CD4-positive, alpha-beta T cell (primary cell): ENCODE measurements at regions of chr1 and their contacts with region 1.

Region 1: GRCh38 chr1:153946622-153947241 is at the start of gene DENND4B:
- DNase-seq: peak; percentile 55 to 89 (median 70)
- ATAC-seq: peak; percentile 57
- H3K4me3 ChIP-seq: peak within 1 kb of the TSS; percentile 84
- H3K4me3 Mint-ChIP-seq: peak within 1 kb of the TSS; percentile 89
- H3K27ac ChIP-seq: peak within 1 kb of the TSS; percentile 92 to 94
- H3K27ac Mint-ChIP-seq: peak within 1 kb of the TSS; percentile 86
- H3K4me1 ChIP-seq: peaks cover 50% of the 10 kb centered on the region
- H3K4me1 Mint-ChIP-seq: peaks cover 38% of the 10 kb centered on the region
- H3K27me3 ChIP-seq: no peaks in the 10 kb centered on the region
- H3K27me3 Mint-ChIP-seq: no peaks in the 10 kb centered on the region
- CTCF ChIP-seq: peak; percentile 88
- total RNA-seq, gene DENND4B: 87.0 to 98.7 TPM

Region 2: DNA sequence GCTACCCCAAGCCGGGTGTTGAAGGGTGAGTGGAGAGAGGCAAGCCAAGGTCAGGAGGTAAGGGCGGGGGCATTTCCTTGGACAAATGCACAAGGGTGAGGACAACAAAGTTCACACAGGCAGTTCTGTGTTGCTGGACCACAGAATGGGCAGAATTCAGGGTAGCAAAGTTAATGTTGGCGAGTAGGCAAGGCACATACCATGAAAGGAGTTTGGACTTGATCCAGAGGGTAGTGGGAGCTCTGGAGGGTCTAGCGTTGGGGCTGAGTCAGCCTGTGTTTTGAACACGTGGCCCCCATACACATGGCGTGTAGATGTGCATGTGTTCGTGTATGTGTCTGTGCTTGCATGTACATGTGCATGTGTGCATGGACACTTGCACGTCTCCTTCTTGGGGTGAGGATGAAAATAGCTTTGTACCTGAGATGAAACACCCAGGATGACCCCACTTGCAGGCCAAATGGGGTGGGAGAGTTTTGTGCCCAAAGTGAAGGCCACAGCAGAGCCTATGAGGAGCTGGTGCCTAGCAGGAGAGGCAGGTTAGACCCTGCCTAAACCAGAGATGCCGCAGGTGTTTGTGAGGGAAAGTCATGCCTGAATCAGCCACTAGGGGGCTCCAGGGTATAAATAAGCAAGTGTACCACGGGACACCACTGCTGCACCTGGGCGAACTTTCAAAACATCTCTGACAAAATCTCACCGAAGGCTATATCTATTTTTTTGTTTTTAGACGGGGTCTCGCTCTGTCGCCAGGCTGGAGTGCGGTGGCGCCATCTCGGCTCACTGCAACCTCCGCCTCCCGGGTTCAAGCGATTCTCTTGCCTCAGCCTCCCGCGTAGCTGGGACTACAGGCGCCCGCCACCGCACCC is 149.7 kb before region 1 on chr1:
- CTCF ChIA-PET with region 1: interaction called, 5 read pairs
- POLR2A ChIA-PET with region 1: no interaction called
- intact Hi-C with region 1: loop called (anchors 1 kb)
- DNase-seq: peak; percentile 70 to 92 (median 84)
- ATAC-seq: peak; percentile 98
- H3K4me3 ChIP-seq: no peak overlapping the region
- H3K4me3 Mint-ChIP-seq: no peak overlapping the region
- H3K27ac ChIP-seq: no peak overlapping the region
- H3K27ac Mint-ChIP-seq: no peak overlapping the region
- H3K4me1 ChIP-seq: peaks cover 13% of the 10 kb centered on the region
- H3K4me1 Mint-ChIP-seq: peaks cover 5% of the 10 kb centered on the region
- H3K27me3 ChIP-seq: no peaks in the 10 kb centered on the region
- H3K27me3 Mint-ChIP-seq: no peaks in the 10 kb centered on the region
- CTCF ChIP-seq: peak; percentile 84

Region 3: DNA sequence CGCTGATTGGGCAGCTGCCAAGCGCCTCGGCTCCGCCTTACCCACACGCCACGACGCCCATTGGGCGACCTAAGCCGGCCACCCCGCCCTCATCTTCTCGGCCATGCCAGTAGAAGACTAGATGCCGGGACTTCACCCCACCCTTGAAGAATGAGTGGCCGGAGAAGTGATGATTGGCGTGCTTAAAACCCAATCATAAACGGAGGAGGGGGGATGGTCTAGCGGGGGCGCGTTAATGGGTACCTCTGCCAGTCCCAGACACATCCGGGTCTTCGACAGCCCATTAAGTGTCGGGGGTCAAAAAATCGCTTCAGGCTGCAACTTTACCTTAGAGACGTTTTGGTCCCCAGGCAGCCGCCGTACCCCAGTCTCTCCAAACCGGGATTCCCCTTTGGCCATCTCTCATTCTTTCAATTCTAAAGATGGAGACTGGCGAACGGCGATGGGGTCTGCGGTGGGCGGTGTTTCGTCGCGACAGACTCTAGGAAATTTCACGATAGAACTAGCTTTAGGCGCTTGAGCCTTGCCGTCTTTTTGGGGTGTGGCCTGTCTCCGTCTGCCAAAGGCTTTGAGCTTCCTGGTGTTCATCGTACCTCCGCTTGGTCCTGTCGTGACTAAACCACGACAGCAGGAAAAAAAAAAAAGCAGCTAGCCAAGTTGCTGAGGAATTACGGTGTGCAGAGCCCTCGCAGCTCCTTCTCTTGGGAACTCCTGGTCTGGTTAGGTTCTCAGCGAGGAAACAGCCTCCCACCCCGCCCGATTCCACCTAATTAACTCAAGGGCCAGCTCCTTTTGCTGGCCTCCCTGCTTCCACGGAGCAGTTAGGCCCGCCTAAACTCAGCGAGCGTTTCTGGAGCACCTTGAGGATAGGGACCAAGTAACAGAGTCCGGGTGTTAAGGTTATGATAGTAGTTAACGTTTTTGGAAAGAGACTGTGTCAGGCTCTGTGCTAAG is 23.5 kb before region 1 on chr1 and contains the start of gene GATAD2B:
- CTCF ChIA-PET with region 1: interaction called, 26 read pairs
- POLR2A ChIA-PET with region 1: interaction called, 143 read pairs
- intact Hi-C with region 1: loop called (anchors 1 kb)
- DNase-seq: peak; percentile 97 to 100 (median 98)
- ATAC-seq: peak; percentile 89
- H3K4me3 ChIP-seq: peak within 1 kb of the TSS; percentile 91
- H3K4me3 Mint-ChIP-seq: peak within 1 kb of the TSS; percentile 96
- H3K27ac ChIP-seq: peak within 1 kb of the TSS; percentile 95
- H3K27ac Mint-ChIP-seq: peak within 1 kb of the TSS; percentile 99
- H3K4me1 ChIP-seq: peaks cover 48% of the 10 kb centered on the region
- H3K4me1 Mint-ChIP-seq: peaks cover 56% of the 10 kb centered on the region
- H3K27me3 ChIP-seq: no peaks in the 10 kb centered on the region
- H3K27me3 Mint-ChIP-seq: peaks cover 6% of the 10 kb centered on the region
- CTCF ChIP-seq: no peak
- total RNA-seq, gene GATAD2B: 51.6 to 52.3 TPM

Region 4: DNA sequence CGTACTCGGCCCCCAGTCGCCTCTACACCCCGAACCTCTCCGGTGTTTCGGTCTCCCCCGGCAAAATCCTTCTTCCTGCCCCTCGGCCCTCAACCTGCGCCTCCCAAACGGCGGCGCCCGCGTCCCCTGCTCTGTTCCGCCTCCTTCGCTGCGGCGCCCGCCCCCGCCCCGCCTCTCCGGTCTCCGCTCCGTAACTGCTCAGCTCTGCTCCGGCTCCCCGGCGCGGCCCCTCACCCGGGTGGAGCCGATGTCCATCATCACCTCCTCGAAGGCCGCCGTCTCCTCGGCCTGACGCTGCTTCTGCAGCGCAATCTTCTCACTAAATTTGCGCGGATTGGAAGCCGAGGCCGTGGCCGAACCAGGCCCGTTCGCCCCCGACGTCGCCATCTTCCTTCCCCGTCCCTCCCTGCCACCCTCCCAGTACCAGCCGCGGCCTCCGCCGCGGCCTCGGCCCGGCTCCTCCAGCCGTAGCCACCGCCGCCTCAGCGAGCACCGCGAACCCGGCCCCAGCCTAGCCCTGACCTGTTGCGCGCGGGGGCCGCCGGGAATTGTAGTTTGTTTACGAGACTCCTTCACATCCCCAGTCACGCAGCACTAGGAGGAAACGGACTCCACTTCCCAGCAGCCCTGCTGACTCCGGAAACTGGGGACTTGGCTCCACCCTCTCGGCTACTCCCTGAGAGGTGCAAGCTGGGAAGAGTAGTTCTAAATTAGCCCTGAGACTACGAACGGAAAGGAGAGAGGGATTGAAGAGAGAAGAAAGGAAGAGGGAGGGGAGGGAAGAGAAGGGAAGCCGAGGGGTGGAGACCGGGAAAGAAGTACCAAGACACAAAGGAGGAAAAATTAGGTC is 11.6 kb after region 1 on chr1 and contains the start of gene CRTC2:
- CTCF ChIA-PET with region 1: interaction called, 31 read pairs
- POLR2A ChIA-PET with region 1: interaction called, 73 read pairs
- intact Hi-C with region 1: loop called (anchors 1 kb)
- DNase-seq: peak; percentile 93 to 99 (median 97)
- ATAC-seq: peak; percentile 88
- H3K4me3 ChIP-seq: peak within 1 kb of the TSS; percentile 75
- H3K4me3 Mint-ChIP-seq: peak within 1 kb of the TSS; percentile 94
- H3K27ac ChIP-seq: peak within 1 kb of the TSS; percentile 89 to 91
- H3K27ac Mint-ChIP-seq: peak within 1 kb of the TSS; percentile 89
- H3K4me1 ChIP-seq: peaks cover 65% of the 10 kb centered on the region
- H3K4me1 Mint-ChIP-seq: peaks cover 68% of the 10 kb centered on the region
- H3K27me3 ChIP-seq: no peaks in the 10 kb centered on the region
- H3K27me3 Mint-ChIP-seq: no peaks in the 10 kb centered on the region
- CTCF ChIP-seq: no peak
- total RNA-seq, gene CRTC2: 147 to 152 TPM

Region 5: DNA sequence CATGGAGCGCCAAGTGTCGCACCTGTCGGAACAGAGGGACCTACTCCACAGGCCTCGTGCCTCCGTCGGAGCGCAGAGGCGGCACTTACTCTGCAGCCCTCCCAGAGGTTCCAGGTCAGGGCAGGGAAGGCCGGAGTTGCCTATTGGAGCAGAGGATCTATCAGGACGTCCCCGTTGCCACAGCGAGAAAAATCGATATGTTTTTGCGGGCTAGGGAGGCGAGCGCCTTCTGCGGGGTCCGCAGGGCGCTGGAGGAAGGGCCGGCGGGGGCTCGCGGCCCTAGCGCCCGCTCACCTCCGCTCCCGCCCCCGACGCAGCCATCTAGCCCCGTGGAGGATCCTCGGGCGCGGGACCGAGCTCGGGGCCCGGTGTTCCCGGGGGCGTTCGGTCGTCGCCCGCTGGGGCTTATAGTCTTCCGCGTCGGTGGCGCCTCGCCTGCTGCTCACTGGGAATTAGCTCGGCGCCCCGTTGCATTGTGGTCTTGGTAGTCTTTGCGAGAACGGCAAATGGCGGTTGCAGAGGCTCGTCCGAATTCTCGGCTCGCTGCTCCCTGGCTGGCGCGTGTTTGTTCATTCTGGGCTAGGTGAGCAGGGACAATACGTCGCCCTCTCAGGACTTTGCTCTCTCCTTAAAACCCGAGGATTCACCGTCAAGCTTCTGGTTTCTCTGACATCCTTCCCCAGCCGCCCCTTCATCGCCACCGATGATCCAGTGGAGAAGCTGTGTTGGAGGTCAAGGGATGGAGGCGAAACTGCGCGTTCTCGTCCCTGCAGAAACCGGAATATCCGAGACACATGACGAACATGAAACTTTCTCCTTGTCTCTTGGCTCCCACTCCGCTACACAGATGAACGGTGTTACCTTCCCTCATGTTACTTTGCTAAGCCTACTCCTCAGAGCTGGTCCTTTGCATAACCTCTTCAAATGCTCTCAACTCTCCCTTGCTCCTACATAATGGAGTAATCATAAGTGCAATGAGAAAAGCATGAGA is 30.8 kb after region 1 on chr1 and contains the start of gene JTB:
- CTCF ChIA-PET with region 1: interaction called, 7 read pairs
- POLR2A ChIA-PET with region 1: interaction called, 80 read pairs
- intact Hi-C with region 1: no loop called
- DNase-seq: peak; percentile 68 to 91 (median 82)
- ATAC-seq: peak; percentile 96
- H3K4me3 ChIP-seq: peak within 1 kb of the TSS; percentile 82
- H3K4me3 Mint-ChIP-seq: peak within 1 kb of the TSS; percentile 98
- H3K27ac ChIP-seq: peak within 1 kb of the TSS; percentile 80 to 83
- H3K27ac Mint-ChIP-seq: peak within 1 kb of the TSS; percentile 94
- H3K4me1 ChIP-seq: peaks cover 31% of the 10 kb centered on the region
- H3K4me1 Mint-ChIP-seq: peaks cover 42% of the 10 kb centered on the region
- H3K27me3 ChIP-seq: no peaks in the 10 kb centered on the region
- H3K27me3 Mint-ChIP-seq: no peaks in the 10 kb centered on the region
- CTCF ChIP-seq: no peak
- total RNA-seq, gene JTB: 80.4 to 80.9 TPM